CD4-positive, alpha-beta T cell (primary cell): ENCODE measurements at regions of chr19 and their contacts with region 1.

Region 1: GRCh38 chr19:2236314-2237050 is at the starts of genes PLEKHJ1 and SF3A2:
- DNase-seq: peak; percentile 94 to 99 (median 98)
- ATAC-seq: peak; percentile 81
- H3K4me3 ChIP-seq: peak within 1 kb of the TSS; percentile 80
- H3K4me3 Mint-ChIP-seq: peak within 1 kb of the TSS; percentile 98
- H3K27ac ChIP-seq: peak within 1 kb of the TSS; percentile 98 to 99
- H3K27ac Mint-ChIP-seq: peak within 1 kb of the TSS; percentile 99
- H3K4me1 ChIP-seq: peaks cover 79% of the 10 kb centered on the region
- H3K4me1 Mint-ChIP-seq: peaks cover 63% of the 10 kb centered on the region
- H3K27me3 ChIP-seq: no peaks in the 10 kb centered on the region
- H3K27me3 Mint-ChIP-seq: peaks cover 4% of the 10 kb centered on the region
- CTCF ChIP-seq: peak; percentile 99
- total RNA-seq, gene PLEKHJ1: 21.4 to 23.2 TPM
- total RNA-seq, gene SF3A2: 186 to 194 TPM

Region 2: GRCh38 chr19:2016041-2016807 is 220.3 kb before region 1 on chr19:
- CTCF ChIA-PET with region 1: no interaction called
- POLR2A ChIA-PET with region 1: no interaction called
- intact Hi-C with region 1: loop called in 1 of 2 experiments (anchors 10 kb)
- DNase-seq: peak in 12 of 14 experiments; percentile 42 to 86 (median 54)
- ATAC-seq: peak; percentile 63
- H3K4me3 ChIP-seq: peak overlapping the region; percentile 30
- H3K4me3 Mint-ChIP-seq: peak overlapping the region; percentile 76
- H3K27ac ChIP-seq: no peak overlapping the region
- H3K27ac Mint-ChIP-seq: peak overlapping the region; percentile 69
- H3K4me1 ChIP-seq: peaks cover 33% of the 10 kb centered on the region
- H3K4me1 Mint-ChIP-seq: peaks cover 22% of the 10 kb centered on the region
- H3K27me3 ChIP-seq: no peaks in the 10 kb centered on the region
- H3K27me3 Mint-ChIP-seq: no peaks in the 10 kb centered on the region
- CTCF ChIP-seq: no peak

Region 3: DNA sequence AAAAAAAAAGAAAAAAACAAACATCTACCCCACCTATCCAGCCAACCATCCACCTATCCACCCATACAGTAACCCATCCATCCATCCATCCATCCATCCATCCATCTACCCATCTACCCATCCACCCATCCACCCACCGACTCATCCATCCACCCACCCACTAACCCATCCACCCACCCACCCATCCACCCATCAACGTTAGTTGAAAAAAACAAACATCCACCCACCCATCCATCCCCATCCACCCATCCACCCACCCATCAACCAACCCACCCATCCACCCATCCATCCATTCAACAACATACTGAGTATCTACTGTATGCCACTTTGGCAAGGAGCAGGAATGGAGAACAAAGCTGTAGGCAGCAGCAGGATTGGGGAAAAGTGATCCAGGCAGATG is 79.0 kb before region 1 on chr19:
- CTCF ChIA-PET with region 1: interaction called, 11 read pairs
- POLR2A ChIA-PET with region 1: interaction called, 5 read pairs
- intact Hi-C with region 1: loop called in 1 of 2 experiments (anchors 2 kb)
- DNase-seq: no peak
- ATAC-seq: no peak
- H3K4me3 ChIP-seq: no peak overlapping the region
- H3K4me3 Mint-ChIP-seq: no peak overlapping the region
- H3K27ac ChIP-seq: no peak overlapping the region
- H3K27ac Mint-ChIP-seq: no peak overlapping the region
- H3K4me1 ChIP-seq: peaks cover 5% of the 10 kb centered on the region
- H3K4me1 Mint-ChIP-seq: no peaks in the 10 kb centered on the region
- H3K27me3 ChIP-seq: no peaks in the 10 kb centered on the region
- H3K27me3 Mint-ChIP-seq: no peaks in the 10 kb centered on the region
- CTCF ChIP-seq: no peak

Region 4: GRCh38 chr19:2269244-2269947 is 32.9 kb after region 1 on chr19:
- CTCF ChIA-PET with region 1: interaction called, 16 read pairs
- POLR2A ChIA-PET with region 1: interaction called, 103 read pairs
- intact Hi-C with region 1: loop called (anchors 1 kb)
- DNase-seq: peak; percentile 98 to 99 (median 99)
- ATAC-seq: peak; percentile 77
- H3K4me3 ChIP-seq: peak overlapping the region; percentile 98
- H3K4me3 Mint-ChIP-seq: peak overlapping the region; percentile 97
- H3K27ac ChIP-seq: peak overlapping the region; percentile 50 to 94
- H3K27ac Mint-ChIP-seq: peak overlapping the region; percentile 97
- H3K4me1 ChIP-seq: peaks cover 50% of the 10 kb centered on the region
- H3K4me1 Mint-ChIP-seq: peaks cover 30% of the 10 kb centered on the region
- H3K27me3 ChIP-seq: peaks cover 0 to 6% of the 10 kb centered on the region in 2 experiments
- H3K27me3 Mint-ChIP-seq: no peaks in the 10 kb centered on the region
- CTCF ChIP-seq: no peak

Region 5: DNA sequence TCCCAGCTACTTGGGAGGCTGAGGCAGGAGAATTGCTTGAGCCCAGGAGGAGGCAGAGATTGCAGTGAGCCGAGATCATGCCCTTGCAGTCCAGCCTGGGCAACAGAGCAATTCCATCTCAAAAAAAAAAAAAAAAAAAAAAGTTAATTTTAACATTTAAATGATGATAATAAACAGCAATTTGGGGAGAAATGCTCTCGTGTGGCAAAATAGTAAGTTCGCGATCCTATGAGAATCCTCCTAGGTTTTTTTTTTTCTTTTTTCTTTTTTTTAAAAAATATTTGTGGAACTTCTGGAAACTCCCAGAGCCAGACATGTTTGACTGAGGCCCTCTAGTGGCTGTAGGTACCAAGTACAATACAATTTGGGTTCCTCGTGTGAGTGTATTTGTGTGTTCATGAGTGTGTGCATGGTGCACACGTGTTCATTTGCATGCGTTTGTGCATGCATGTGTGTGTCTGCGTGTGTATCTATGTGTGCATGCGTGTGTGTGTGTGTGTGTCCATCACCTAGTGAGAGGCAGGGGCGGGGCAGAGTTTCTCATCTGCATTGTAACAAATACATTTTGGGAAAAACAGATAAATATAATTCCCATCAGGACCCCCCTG is 154.7 kb after region 1 on chr19:
- CTCF ChIA-PET with region 1: interaction called, 4 read pairs
- POLR2A ChIA-PET with region 1: no interaction called
- intact Hi-C with region 1: loop called (anchors 1 to 2 kb)
- DNase-seq: peak in 12 of 14 experiments; percentile 6 to 83 (median 23)
- ATAC-seq: peak; percentile 85
- H3K4me3 ChIP-seq: no peak overlapping the region
- H3K4me3 Mint-ChIP-seq: no peak overlapping the region
- H3K27ac ChIP-seq: no peak overlapping the region
- H3K27ac Mint-ChIP-seq: no peak overlapping the region
- H3K4me1 ChIP-seq: peaks cover 12% of the 10 kb centered on the region
- H3K4me1 Mint-ChIP-seq: peaks cover 4% of the 10 kb centered on the region
- H3K27me3 ChIP-seq: no peaks in the 10 kb centered on the region
- H3K27me3 Mint-ChIP-seq: peaks cover 12% of the 10 kb centered on the region
- CTCF ChIP-seq: peak; percentile 81

Region 6: GRCh38 chr19:2494444-2495129 is 258.1 kb after region 1 on chr19:
- CTCF ChIA-PET with region 1: no interaction called
- POLR2A ChIA-PET with region 1: no interaction called
- intact Hi-C with region 1: no loop called
- DNase-seq: peak; percentile 11 to 87 (median 48)
- ATAC-seq: peak; percentile 80
- H3K4me3 ChIP-seq: peak overlapping the region; percentile 74
- H3K4me3 Mint-ChIP-seq: peak overlapping the region; percentile 68
- H3K27ac ChIP-seq: no peak overlapping the region
- H3K27ac Mint-ChIP-seq: no peak overlapping the region
- H3K4me1 ChIP-seq: peaks cover 38% of the 10 kb centered on the region
- H3K4me1 Mint-ChIP-seq: peaks cover 14% of the 10 kb centered on the region
- H3K27me3 ChIP-seq: peaks cover 17 to 23% of the 10 kb centered on the region in 2 experiments
- H3K27me3 Mint-ChIP-seq: peaks cover 40% of the 10 kb centered on the region
- CTCF ChIP-seq: no peak

Region 7: GRCh38 chr19:2610637-2611482 is 374.4 kb after region 1 on chr19:
- CTCF ChIA-PET with region 1: no interaction called
- POLR2A ChIA-PET with region 1: no interaction called
- intact Hi-C with region 1: loop called (anchors 5 to 10 kb)
- DNase-seq: peak; percentile 81 to 95 (median 87)
- ATAC-seq: peak; percentile 45
- H3K4me3 ChIP-seq: peak overlapping the region; percentile 59
- H3K4me3 Mint-ChIP-seq: peak overlapping the region; percentile 83
- H3K27ac ChIP-seq: no peak overlapping the region
- H3K27ac Mint-ChIP-seq: peak overlapping the region; percentile 30
- H3K4me1 ChIP-seq: peaks cover 44% of the 10 kb centered on the region
- H3K4me1 Mint-ChIP-seq: peaks cover 44% of the 10 kb centered on the region
- H3K27me3 ChIP-seq: no peaks in the 10 kb centered on the region
- H3K27me3 Mint-ChIP-seq: peaks cover 4% of the 10 kb centered on the region
- CTCF ChIP-seq: peak; percentile 98